ENCODE measurements at regions of chr19 and their contacts with region 1.

Region 1: GRCh38 chr19:37655689-37656371 is 565 bp upstream of the ZFP30 start:
- DNase-seq: peak; percentile 57 to 91 (median 80)
- ATAC-seq: peak; percentile 77
- H3K4me3 ChIP-seq: peak overlapping the region; percentile 82
- H3K4me3 Mint-ChIP-seq: peak overlapping the region; percentile 99
- H3K27ac ChIP-seq: peak overlapping the region; percentile 83 to 91
- H3K27ac Mint-ChIP-seq: peak overlapping the region; percentile 98
- H3K4me1 ChIP-seq: peaks cover 14% of the 10 kb centered on the region
- H3K4me1 Mint-ChIP-seq: peaks cover 41% of the 10 kb centered on the region
- H3K27me3 ChIP-seq: no peaks in the 10 kb centered on the region
- H3K27me3 Mint-ChIP-seq: no peaks in the 10 kb centered on the region
- CTCF ChIP-seq: no peak

Region 2: GRCh38 chr19:37602239-37602638 is 53.6 kb before region 1 on chr19:
- CTCF ChIA-PET with region 1: no interaction called
- POLR2A ChIA-PET with region 1: no interaction called
- intact Hi-C with region 1: no loop called
- DNase-seq: no peak
- ATAC-seq: no peak
- H3K4me3 ChIP-seq: no peak overlapping the region
- H3K4me3 Mint-ChIP-seq: no peak overlapping the region
- H3K27ac ChIP-seq: no peak overlapping the region
- H3K27ac Mint-ChIP-seq: no peak overlapping the region
- H3K4me1 ChIP-seq: no peaks in the 10 kb centered on the region
- H3K4me1 Mint-ChIP-seq: no peaks in the 10 kb centered on the region
- H3K27me3 ChIP-seq: no peaks in the 10 kb centered on the region
- H3K27me3 Mint-ChIP-seq: no peaks in the 10 kb centered on the region
- CTCF ChIP-seq: no peak

Region 3: GRCh38 chr19:37719111-37719926 is 63.5 kb after region 1 on chr19 and contains the start of gene ZNF607:
- CTCF ChIA-PET with region 1: no interaction called
- POLR2A ChIA-PET with region 1: interaction called, 4 read pairs
- intact Hi-C with region 1: loop called in 1 of 2 experiments (anchors 2 kb)
- DNase-seq: peak; percentile 55 to 92 (median 74)
- ATAC-seq: peak; percentile 75
- H3K4me3 ChIP-seq: peak within 1 kb of the TSS; percentile 87
- H3K4me3 Mint-ChIP-seq: peak within 1 kb of the TSS; percentile 91
- H3K27ac ChIP-seq: peak within 1 kb of the TSS; percentile 48 to 55
- H3K27ac Mint-ChIP-seq: peak within 1 kb of the TSS; percentile 79
- H3K4me1 ChIP-seq: peaks cover 15% of the 10 kb centered on the region
- H3K4me1 Mint-ChIP-seq: peaks cover 18% of the 10 kb centered on the region
- H3K27me3 ChIP-seq: no peaks in the 10 kb centered on the region
- H3K27me3 Mint-ChIP-seq: no peaks in the 10 kb centered on the region
- CTCF ChIP-seq: no peak
- total RNA-seq, gene ZNF607: 2.2 to 2.3 TPM

Region 4: DNA sequence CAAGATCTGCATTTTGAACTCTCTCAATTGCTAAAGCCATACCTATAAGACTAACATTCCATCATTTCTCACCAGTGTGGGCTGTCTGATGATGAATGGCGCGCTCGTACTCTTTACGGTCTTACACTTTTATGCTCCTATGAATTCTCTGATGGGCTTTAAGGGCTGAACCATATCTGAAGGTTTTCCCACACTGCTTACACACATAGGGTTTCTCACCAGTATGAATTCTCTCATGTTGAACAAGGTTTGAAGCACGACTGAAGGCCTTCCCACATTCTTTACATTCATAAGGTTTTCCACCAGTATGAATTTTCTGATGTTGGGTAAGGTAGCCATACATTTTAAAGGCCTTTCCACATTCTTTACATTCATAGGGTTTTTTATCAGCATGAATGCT is 82.5 kb after region 1 on chr19:
- CTCF ChIA-PET with region 1: no interaction called
- POLR2A ChIA-PET with region 1: no interaction called
- intact Hi-C with region 1: no loop called
- DNase-seq: no peak
- ATAC-seq: no peak
- H3K4me3 ChIP-seq: no peak overlapping the region
- H3K4me3 Mint-ChIP-seq: no peak overlapping the region
- H3K27ac ChIP-seq: no peak overlapping the region
- H3K27ac Mint-ChIP-seq: no peak overlapping the region
- H3K4me1 ChIP-seq: no peaks in the 10 kb centered on the region
- H3K4me1 Mint-ChIP-seq: no peaks in the 10 kb centered on the region
- H3K27me3 ChIP-seq: no peaks in the 10 kb centered on the region
- H3K27me3 Mint-ChIP-seq: no peaks in the 10 kb centered on the region
- CTCF ChIP-seq: no peak

Region 5: GRCh38 chr19:38263689-38264485 is 608.1 kb after region 1 on chr19:
- CTCF ChIA-PET with region 1: no interaction called
- POLR2A ChIA-PET with region 1: no interaction called
- intact Hi-C with region 1: no loop called
- DNase-seq: peak in 13 of 14 experiments; percentile 63 to 92 (median 74)
- ATAC-seq: peak; percentile 92
- H3K4me3 ChIP-seq: peak overlapping the region; percentile 68
- H3K4me3 Mint-ChIP-seq: peak overlapping the region; percentile 83
- H3K27ac ChIP-seq: peak overlapping the region; percentile 23 to 29
- H3K27ac Mint-ChIP-seq: peak overlapping the region; percentile 52
- H3K4me1 ChIP-seq: peaks cover 24% of the 10 kb centered on the region
- H3K4me1 Mint-ChIP-seq: peaks cover 31% of the 10 kb centered on the region
- H3K27me3 ChIP-seq: no peaks in the 10 kb centered on the region
- H3K27me3 Mint-ChIP-seq: peaks cover 5% of the 10 kb centered on the region
- CTCF ChIP-seq: no peak

Measured in CD4-positive, alpha-beta T cell (primary cell).